Activated T-helper 2 cell treated with anti-CD3 and anti-CD28 coated beads, Interferon-gamma antibody, Interleukin-2, Interleukin-4, amounts not matched to agents 10 μg/mL and 5 μg/mL and 100 μg/mL, durations not matched to agents 14 hours and 24 hours and 36 hours (primary cell): ENCODE measurements at regions of chr1 and their contacts with region 1.

Region 1: GRCh38 chr1:156054500-156055280 is at the start of gene LAMTOR2:
- DNase-seq: peak; percentile 94
- H3K4me3 Mint-ChIP-seq: peak within 1 kb of the TSS; percentile 96
- H3K27ac Mint-ChIP-seq: peak within 1 kb of the TSS; percentile 96
- H3K4me1 Mint-ChIP-seq: peaks cover 25% of the 10 kb centered on the region
- H3K27me3 Mint-ChIP-seq: no peaks in the 10 kb centered on the region
- total RNA-seq, gene LAMTOR2: 71.0 and 72.5 TPM in 2 replicates

Region 2: GRCh38 chr1:155208541-155209311 is 846.0 kb before region 1 on chr1 and contains the start of gene MTX1:
- intact Hi-C with region 1: loop called (anchors 5 kb)
- DNase-seq: peak; percentile 84
- H3K4me3 Mint-ChIP-seq: peak within 1 kb of the TSS; percentile 92
- H3K27ac Mint-ChIP-seq: peak within 1 kb of the TSS; percentile 87
- H3K4me1 Mint-ChIP-seq: peaks cover 24% of the 10 kb centered on the region
- H3K27me3 Mint-ChIP-seq: no peaks in the 10 kb centered on the region
- total RNA-seq, gene MTX1: 58.6 and 64.0 TPM in 2 replicates

Region 3: GRCh38 chr1:155859234-155859829 is 195.4 kb before region 1 on chr1 and contains the start of gene SYT11:
- intact Hi-C with region 1: loop called (anchors 1 kb)
- DNase-seq: peak; percentile 90
- H3K4me3 Mint-ChIP-seq: peak within 1 kb of the TSS; percentile 85
- H3K27ac Mint-ChIP-seq: peak within 1 kb of the TSS; percentile 92
- H3K4me1 Mint-ChIP-seq: peaks cover 41% of the 10 kb centered on the region
- H3K27me3 Mint-ChIP-seq: no peaks in the 10 kb centered on the region
- total RNA-seq, gene SYT11: 22.3 and 23.3 TPM in 2 replicates

Region 4: GRCh38 chr1:156020292-156021089 is 34.2 kb before region 1 on chr1 and contains the start of gene SSR2:
- intact Hi-C with region 1: loop called (anchors 1 kb)
- DNase-seq: peak; percentile 84
- H3K4me3 Mint-ChIP-seq: peak within 1 kb of the TSS; percentile 98
- H3K27ac Mint-ChIP-seq: peak within 1 kb of the TSS; percentile 90
- H3K4me1 Mint-ChIP-seq: peaks cover 19% of the 10 kb centered on the region
- H3K27me3 Mint-ChIP-seq: peaks cover 7% of the 10 kb centered on the region
- total RNA-seq, gene SSR2: 227 and 239 TPM in 2 replicates

Region 5: DNA sequence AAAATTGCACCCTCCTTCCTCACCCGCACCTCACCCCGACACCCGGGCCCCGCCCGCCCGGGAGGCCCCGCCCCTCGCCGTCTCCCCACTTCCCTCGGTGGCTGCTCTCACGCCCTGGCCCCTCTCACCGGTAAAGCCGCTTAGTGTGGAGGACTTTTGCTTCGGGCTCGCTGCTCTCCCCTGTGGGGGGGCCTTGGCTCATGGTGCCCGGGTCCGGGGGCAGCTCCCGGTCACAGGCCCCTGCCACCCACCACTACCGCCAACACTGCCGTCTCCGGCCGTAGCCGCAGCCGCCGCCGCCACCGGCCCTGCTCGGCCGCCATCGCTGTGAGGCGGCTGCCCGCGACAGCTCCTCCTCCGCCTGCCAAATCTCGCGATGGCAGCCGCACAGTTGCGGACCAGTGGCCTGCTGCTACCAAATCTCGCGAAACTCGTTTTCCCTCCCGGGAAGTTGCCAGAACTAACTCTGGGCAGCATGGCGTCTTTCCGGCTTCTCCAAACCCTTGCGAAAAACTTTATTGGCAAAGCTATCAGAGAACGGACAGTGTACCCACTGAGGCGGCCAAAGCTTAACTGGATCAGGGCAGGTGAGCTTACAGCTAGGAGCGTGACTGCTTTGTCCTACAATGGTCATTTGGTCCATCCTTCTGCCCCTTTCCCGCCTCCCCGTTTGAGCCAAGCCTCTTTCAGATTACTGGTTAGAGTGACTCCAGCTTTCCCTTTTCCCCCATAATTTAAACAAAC is 228.0 kb after region 1 on chr1 and contains the start of gene SMG5:
- intact Hi-C with region 1: loop called (anchors 1 kb)
- DNase-seq: peak; percentile 96
- H3K4me3 Mint-ChIP-seq: peak within 1 kb of the TSS; percentile 94
- H3K27ac Mint-ChIP-seq: peak within 1 kb of the TSS; percentile 89
- H3K4me1 Mint-ChIP-seq: peaks cover 31% of the 10 kb centered on the region
- H3K27me3 Mint-ChIP-seq: no peaks in the 10 kb centered on the region
- total RNA-seq, gene SMG5: 83.2 and 89.3 TPM in 2 replicates